Ascending aorta (tissue), 2 donors: ENCODE measurements at regions of chr12 and their contacts with region 1.

Region 1: DNA sequence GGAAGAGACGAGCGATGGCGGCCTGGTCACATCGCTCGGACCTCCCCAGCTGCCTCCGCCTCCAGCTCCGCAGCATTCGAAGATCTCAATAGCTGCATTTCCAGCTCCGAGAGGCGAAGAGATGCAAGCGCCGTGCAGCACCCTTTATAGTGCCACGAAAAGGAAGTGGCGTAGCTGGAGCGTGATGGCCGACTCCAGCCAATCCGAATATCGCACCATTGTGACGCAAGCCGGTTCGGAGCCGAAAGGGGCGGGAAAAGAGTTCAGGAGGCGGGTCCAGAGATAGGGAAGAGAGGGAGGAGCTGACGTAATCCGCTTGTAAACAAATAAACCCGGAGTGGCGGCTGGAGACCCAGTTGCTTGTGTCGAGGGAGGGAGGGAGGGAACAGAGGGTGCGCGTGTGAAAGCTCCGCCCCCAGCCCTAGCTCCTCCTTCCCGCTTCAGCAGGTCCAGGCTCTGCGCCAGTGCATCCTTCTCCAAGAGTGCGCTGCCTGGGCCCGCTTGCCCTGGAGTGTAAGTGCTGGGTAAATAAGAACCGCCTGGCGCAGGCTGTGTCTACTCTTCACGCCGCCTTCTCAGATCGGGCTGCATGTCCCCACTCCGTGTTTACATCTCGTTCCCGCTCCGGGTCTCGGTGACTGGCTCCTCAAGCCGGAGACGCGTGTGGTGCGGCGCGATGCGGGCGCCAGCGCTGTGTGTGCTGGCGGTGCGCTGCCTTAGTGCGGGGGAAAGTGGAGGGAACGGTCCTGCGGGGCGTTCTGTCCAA is at the start of gene BTG1:
- DNase-seq: peak; percentile 97 to 100
- H3K4me3 ChIP-seq: peak within 1 kb of the TSS; percentile 94 to 95
- H3K27ac ChIP-seq: peak within 1 kb of the TSS; percentile 99 to 100
- H3K4me1 ChIP-seq: no peaks in the 10 kb centered on the region
- H3K27me3 ChIP-seq: no peaks in the 10 kb centered on the region
- CTCF ChIP-seq: no peak
- total RNA-seq, gene BTG1: 17.3 TPM

Region 2: DNA sequence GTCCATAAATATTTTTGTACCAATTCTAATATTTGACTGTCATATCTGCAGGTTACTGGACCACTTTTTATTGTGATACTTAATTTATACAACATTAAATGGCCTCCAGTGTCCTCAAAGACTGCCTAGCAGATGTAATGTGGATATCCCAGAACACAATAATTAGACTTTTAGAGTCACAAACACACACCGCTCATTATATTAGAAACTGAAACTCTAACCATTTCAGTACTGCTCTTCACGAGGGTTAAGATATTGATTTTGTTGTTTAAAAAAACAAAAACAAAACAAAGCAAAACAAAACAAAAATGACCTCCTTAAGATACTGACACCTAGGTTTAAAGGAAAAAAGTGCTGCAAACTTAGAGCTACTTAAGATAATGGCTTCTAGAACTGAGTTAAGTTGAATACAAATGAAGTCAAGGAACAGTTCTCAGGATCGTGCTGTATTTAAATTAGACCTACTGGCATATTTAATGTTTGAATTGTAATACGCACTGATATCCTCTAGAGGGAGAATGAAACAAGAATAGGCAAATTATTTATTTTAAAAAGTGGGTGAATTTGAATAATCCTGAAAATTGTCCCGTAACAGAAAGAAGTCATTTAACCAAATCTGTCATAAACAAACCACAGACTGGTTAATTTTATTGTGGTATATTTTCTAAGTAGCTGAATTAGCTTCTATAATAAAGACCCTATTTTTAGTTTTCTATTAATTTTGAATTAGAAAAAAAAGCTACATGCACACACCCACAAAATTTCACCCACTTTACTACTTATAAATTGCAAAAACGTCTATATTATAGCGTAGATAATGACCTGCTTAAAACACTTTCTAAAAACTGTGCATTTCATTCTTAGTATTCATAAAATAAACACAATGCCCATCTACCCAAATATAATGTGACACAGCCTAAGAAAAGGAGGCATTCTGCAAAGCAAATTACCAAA is 568.1 kb before region 1 on chr12:
- intact Hi-C with region 1: loop called (anchors 2 kb)
- DNase-seq: no peak
- H3K4me3 ChIP-seq: peak overlapping the region; percentile 19 to 35
- H3K27ac ChIP-seq: no peak overlapping the region
- H3K4me1 ChIP-seq: no peaks in the 10 kb centered on the region
- H3K27me3 ChIP-seq: no peaks in the 10 kb centered on the region
- CTCF ChIP-seq: peak; percentile 29 to 66 (median 65)

Region 3: GRCh38 chr12:91854725-91855124 is 291.2 kb before region 1 on chr12:
- intact Hi-C with region 1: loop called (anchors 2 kb)
- DNase-seq: no peak
- H3K4me3 ChIP-seq: no peak overlapping the region
- H3K27ac ChIP-seq: peak overlapping the region in 1 of 2 donors; percentile 34
- H3K4me1 ChIP-seq: no peaks in the 10 kb centered on the region
- H3K27me3 ChIP-seq: no peaks in the 10 kb centered on the region
- CTCF ChIP-seq: no peak

Region 4: DNA sequence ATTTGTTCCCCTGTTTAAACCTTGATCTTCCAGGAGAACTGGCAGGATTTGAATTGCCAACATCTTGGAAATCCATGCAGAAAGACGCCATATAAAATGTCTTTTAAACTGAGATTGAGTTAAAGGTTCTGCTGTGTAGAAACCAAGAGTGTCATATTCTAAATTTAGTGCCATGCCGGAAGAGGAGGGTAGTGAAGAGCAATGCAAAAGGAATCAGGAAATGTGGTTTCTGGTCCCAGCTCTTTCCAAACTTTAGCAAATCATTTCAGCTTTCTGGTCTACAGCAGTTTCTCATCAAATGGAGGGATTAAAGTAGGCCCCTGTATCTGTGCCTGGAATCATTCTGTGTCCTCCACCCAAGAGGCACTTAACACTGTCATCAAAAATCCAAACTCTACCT is 85.9 kb before region 1 on chr12:
- intact Hi-C with region 1: loop called (anchors 2 kb)
- DNase-seq: no peak
- H3K4me3 ChIP-seq: peak overlapping the region in 1 of 2 donors; percentile 31
- H3K27ac ChIP-seq: peak overlapping the region; percentile 57 to 74
- H3K4me1 ChIP-seq: peaks cover 4 to 12% of the 10 kb centered on the region in 2 donors
- H3K27me3 ChIP-seq: no peaks in the 10 kb centered on the region
- CTCF ChIP-seq: no peak

Region 5: GRCh38 chr12:92561543-92561899 is 415.6 kb after region 1 on chr12:
- intact Hi-C with region 1: loop called (anchors 2 kb)
- DNase-seq: peak; percentile 14 to 80
- H3K4me3 ChIP-seq: peak overlapping the region in 1 of 2 donors; percentile 2
- H3K27ac ChIP-seq: peak overlapping the region; percentile 27 to 52
- H3K4me1 ChIP-seq: peaks cover 11 to 21% of the 10 kb centered on the region in 2 donors
- H3K27me3 ChIP-seq: no peaks in the 10 kb centered on the region
- CTCF ChIP-seq: no peak

Region 6: DNA sequence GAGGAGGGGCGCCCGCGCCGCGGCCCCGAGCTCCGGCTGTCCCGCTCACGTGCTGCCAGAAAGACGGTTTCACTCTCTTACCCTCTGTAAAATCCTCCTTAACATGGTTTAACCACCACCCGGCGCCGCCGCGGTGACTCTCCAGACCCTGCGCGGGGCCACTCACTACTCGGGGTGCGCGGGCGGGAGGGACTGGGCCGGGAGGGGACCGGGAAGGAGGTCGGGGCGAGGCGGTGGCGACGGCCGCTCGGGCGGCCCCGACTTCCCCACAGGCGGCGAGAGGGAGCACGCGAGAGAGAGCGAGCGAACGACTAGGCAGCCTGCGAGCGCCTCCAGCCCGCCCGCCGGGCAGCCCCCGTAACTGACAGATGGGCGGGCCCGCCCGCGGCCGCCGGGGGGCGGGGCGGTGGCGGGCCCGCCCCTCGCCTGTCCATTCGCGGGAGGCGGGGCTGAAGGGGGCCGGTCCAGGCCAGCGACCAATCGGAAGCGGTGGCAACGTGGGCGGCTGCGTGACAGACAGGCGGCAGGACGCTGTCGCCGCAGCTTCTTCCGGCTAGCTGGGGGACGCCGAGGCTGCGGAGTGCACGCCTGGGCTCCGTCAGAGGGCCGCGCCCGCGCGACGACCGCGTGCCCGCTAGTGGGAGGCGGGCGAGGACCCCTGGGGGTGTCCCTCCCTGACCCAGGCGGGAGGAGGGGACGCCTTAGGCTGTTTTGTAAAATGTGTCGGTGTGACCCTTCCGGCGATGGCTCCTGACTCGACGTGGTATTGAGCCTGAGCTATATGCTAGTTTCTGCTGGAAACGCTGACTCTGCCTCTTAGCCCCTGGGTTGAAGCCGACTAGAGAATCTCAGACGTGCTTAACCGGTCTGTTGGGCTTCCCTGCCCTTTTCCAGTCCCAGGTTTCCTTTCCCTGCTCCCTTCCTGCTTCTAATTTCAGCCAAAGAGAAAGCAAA is 783.3 kb after region 1 on chr12 and contains the start of gene EEA1:
- intact Hi-C with region 1: loop called (anchors 5 kb)
- DNase-seq: peak; percentile 82 to 97
- H3K4me3 ChIP-seq: peak within 1 kb of the TSS; percentile 69 to 100
- H3K27ac ChIP-seq: peak within 1 kb of the TSS; percentile 98 to 99
- H3K4me1 ChIP-seq: peaks cover 5 to 13% of the 10 kb centered on the region in 2 donors
- H3K27me3 ChIP-seq: no peaks in the 10 kb centered on the region
- CTCF ChIP-seq: peak; percentile 11 to 36 (median 30)
- total RNA-seq, gene EEA1: 10.9 TPM